ENCODE measurements at regions of chr15 and their contacts with region 1.

Region 1: GRCh38 chr15:90648137-90649070 is 68.7 kb upstream of the BLM start:
- DNase-seq: peak in 1 of 2 donors; percentile 93
- H3K4me3 ChIP-seq: no peak overlapping the region
- H3K27ac ChIP-seq: peak overlapping the region; percentile 77
- H3K4me1 ChIP-seq: peaks cover 10% of the 10 kb centered on the region
- H3K27me3 ChIP-seq: no peaks in the 10 kb centered on the region
- CTCF ChIP-seq: peak; percentile 89 to 95 (median 92)
- POLR2A ChIP-seq: no peak

Region 2: GRCh38 chr15:90529371-90530249 is 118.8 kb before region 1 on chr15 and contains the start of gene CRTC3:
- intact Hi-C with region 1: no loop called
- DNase-seq: no peak
- H3K4me3 ChIP-seq: peak within 1 kb of the TSS; percentile 69 to 84
- H3K27ac ChIP-seq: peak within 1 kb of the TSS; percentile 91
- H3K4me1 ChIP-seq: peaks cover 34% of the 10 kb centered on the region
- H3K27me3 ChIP-seq: no peaks in the 10 kb centered on the region
- CTCF ChIP-seq: no peak
- POLR2A ChIP-seq: peak in 1 of 2 donors; percentile 71
- total RNA-seq, gene CRTC3: 43.5 TPM

Region 3: DNA sequence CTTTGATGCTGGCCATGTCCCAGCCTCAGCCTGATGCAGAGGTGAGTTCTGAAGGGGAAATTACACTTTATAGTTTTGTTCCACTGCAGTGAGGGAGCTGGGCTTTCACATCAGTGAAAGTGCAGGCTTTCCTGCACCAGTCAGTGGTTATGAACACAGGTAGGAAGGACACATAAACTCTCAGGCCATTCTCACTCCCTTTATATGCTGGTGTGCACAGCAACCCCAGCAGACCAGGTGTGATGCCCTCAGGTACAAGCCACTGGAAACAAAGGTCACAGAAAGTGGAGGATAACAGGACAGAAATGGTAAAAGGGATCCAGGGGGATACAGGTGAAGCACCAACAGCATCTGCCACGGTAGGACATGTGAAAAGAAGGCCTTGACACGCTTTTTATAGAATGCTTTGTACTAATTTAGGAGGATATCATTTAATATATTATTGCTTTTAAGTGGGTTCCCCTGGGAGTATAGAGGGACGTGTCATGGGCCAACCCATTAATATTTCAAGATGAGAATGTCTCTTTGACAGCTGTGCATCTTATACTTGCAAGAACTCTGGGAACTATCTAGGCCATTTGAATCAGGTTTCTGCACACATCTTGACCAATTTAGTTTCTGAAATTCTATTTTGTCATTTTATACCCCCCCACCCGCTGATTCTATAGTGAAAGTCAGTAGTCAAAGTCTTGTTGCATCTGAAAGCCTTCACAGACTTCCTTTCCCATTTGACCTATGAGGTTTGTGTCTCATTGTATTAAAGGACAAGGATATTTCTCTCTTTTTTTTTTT is 43.8 kb after region 1 on chr15:
- intact Hi-C with region 1: loop called (anchors 5 kb)
- DNase-seq: no peak
- H3K4me3 ChIP-seq: no peak overlapping the region
- H3K27ac ChIP-seq: no peak overlapping the region
- H3K4me1 ChIP-seq: no peaks in the 10 kb centered on the region
- H3K27me3 ChIP-seq: no peaks in the 10 kb centered on the region
- CTCF ChIP-seq: no peak
- POLR2A ChIP-seq: no peak